A549 (cell line): ENCODE measurements at regions of chr22 and their contacts with region 1.

Region 1: GRCh38 chr22:35582861-35583670 is 34.1 kb downstream of the MB start:
- DNase-seq: peak; percentile 73 to 86
- ATAC-seq: peak; percentile 90 to 91
- H3K4me3 ChIP-seq: no peak overlapping the region
- H3K27ac ChIP-seq: peak overlapping the region; percentile 72 to 78
- H3K4me1 ChIP-seq: peaks cover 33% of the 10 kb centered on the region
- CTCF ChIP-seq: peak; percentile 85
- EP300 ChIP-seq: no peak
- POLR2A ChIP-seq: no peak
- RAD21 ChIP-seq: peak; percentile 90 to 91

Region 2: DNA sequence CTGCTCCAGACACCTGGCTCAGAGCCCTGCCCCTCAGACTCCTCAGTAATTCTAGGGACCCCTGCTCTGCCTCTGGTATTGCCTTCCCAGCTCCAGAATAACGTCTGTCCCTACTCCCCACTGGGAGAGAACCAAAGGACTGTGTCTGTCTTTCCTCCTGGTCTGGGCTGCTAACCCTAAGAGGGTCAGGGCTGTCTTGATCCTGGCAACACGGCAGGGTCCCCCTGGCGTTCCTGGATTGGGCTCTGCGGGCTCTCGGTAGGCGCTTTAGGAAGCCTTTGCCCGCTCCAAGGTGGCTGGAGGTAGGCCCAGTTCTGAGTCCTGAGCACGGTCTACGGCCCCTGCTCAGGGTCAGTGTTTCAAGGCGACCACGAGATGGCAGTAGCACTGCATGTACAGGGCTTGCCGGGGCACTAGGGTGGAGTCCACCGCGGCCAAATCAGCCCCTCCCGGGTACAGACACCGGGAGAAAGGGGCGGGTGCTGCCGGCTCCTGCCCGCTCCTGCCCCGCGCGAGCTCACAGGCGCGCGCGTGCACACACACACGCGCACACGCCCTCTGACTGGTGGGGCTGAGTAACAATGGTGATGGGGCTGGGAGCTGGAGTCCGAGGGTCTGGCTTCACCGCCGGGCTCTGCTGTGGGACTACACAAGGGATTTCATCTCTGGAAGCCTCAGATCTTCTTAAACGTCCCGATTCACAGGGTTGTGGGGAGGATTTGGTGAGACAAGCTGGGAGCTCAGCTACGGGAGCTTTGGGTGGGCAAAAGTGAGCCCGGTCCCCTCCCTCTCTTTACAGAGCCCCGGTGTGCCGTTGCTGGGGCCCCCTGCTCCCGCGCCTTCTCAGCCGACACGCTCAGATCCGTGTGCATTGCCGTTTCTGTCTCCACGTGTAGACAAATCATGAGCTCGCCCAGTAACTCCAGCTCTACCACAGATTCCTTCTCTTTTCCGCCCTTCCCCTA is 232.2 kb before region 1 on chr22:
- CTCF ChIA-PET with region 1: interaction called, 46 read pairs
- POLR2A ChIA-PET with region 1: no interaction called
- DNase-seq: peak; percentile 85 to 91
- ATAC-seq: peak; percentile 81 to 93
- H3K4me3 ChIP-seq: peak overlapping the region; percentile 49
- H3K27ac ChIP-seq: peak overlapping the region; percentile 95 to 98
- H3K4me1 ChIP-seq: peaks cover 29% of the 10 kb centered on the region
- CTCF ChIP-seq: peak; percentile 74
- EP300 ChIP-seq: no peak
- POLR2A ChIP-seq: peak; percentile 57
- RAD21 ChIP-seq: peak; percentile 91 to 95

Region 3: DNA sequence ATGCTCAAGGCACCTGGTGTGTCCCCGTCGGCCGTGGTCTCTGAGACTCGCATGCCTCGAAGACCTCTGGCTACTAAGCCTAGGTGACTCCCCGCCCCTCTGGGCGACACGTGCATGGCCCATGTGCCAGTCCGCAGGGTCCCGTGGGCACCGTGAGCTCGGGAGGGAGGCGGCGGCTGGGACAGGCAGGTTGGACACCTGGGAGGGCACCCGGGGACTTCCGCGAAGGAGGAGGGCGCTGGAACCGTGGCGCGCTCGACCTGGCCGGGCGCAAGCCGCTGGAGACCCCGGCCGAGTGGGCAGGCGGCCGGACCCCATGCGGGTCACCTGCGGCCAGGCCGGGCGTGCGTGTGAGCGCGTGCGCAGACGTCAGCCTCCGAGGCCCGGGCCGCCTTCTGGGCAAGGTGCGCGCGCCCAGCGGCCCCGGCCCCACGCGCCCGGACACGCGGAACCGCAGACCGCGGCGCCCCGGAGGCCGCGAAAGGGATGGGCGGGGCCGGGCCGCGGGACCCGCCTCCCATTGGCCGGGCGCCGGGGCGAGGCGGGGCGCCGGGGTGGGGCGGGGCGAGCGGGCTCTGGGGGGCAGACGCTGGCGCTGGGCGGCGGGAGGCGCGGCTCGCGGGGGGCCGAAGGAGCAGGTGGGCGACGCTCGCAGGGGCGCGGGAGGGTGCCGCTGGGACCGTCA is 43.0 kb before region 1 on chr22:
- CTCF ChIA-PET with region 1: interaction called, 15 read pairs
- POLR2A ChIA-PET with region 1: no interaction called
- DNase-seq: peak in 1 of 2 experiments; percentile 44
- ATAC-seq: peak; percentile 69 to 76
- H3K4me3 ChIP-seq: peak overlapping the region; percentile 65
- H3K27ac ChIP-seq: peak overlapping the region; percentile 83 to 92
- H3K4me1 ChIP-seq: peaks cover 19% of the 10 kb centered on the region
- CTCF ChIP-seq: no peak
- EP300 ChIP-seq: no peak
- POLR2A ChIP-seq: peak; percentile 36; the same call in 1 of the 2 replicates
- RAD21 ChIP-seq: no peak

Region 4: DNA sequence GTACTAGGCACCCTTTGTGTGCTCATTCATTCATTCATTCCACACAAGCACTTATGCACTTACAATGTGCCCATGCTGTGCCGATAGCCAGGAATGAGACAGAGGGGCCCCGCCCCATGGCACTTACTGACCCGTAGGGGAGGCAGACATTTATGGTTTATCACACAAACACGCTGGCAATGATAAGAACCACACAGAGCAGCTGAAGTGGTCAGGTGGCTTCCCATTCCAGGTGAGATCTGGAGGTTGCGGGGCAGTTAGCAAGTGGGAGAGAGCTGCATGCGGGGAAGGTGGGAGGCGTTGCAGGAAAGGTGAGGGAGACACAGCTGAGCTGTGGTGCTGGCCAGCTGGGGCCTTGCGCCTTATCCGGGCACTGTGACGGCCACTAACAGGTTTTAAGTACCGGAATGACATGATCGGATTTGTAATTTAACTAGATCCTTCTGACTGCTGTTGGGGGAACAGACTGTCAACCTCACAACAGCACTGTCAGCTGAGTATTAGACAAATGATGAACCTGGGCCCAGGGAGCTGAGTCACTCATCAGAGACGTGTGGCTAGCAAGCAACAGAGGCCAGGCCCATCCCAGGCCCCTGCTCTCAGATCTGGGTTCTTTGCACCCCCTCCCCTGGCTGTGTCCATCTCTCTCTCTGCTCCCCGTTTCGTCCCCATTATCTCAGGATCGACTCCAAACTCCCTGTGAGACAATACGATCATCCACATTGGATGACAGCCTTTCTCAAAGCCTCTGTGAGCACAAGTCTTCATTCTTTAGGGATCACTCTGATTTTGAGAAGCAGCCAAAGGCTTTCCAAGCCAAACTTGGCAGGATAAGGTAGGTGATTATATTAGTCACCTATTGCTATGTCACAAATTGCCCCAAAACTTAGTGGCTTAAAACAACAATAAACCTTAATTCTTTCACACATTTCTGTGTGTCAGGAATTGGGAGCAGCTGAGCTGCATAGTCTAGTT is 14.0 kb before region 1 on chr22:
- CTCF ChIA-PET with region 1: interaction called, 29 read pairs
- POLR2A ChIA-PET with region 1: no interaction called
- DNase-seq: no peak
- ATAC-seq: peak in 1 of 2 experiments; percentile 69; a peak in 3 of 6 replicates
- H3K4me3 ChIP-seq: no peak overlapping the region
- H3K27ac ChIP-seq: peak overlapping the region; percentile 30 to 55; a peak in 3 of 6 replicates
- H3K4me1 ChIP-seq: peaks cover 15% of the 10 kb centered on the region
- CTCF ChIP-seq: no peak
- EP300 ChIP-seq: no peak
- POLR2A ChIP-seq: no peak
- RAD21 ChIP-seq: no peak

Region 5: GRCh38 chr22:35596821-35597220 is 13.8 kb after region 1 on chr22:
- CTCF ChIA-PET with region 1: no interaction called
- POLR2A ChIA-PET with region 1: no interaction called
- DNase-seq: no peak
- ATAC-seq: no peak
- H3K4me3 ChIP-seq: no peak overlapping the region
- H3K27ac ChIP-seq: no peak overlapping the region
- H3K4me1 ChIP-seq: peaks cover 18% of the 10 kb centered on the region
- CTCF ChIP-seq: no peak
- EP300 ChIP-seq: no peak
- POLR2A ChIP-seq: no peak
- RAD21 ChIP-seq: no peak

Region 6: GRCh38 chr22:35611891-35612576 is 29.0 kb after region 1 on chr22:
- CTCF ChIA-PET with region 1: interaction called, 16 read pairs
- POLR2A ChIA-PET with region 1: no interaction called
- DNase-seq: no peak
- ATAC-seq: no peak
- H3K4me3 ChIP-seq: no peak overlapping the region
- H3K27ac ChIP-seq: peak overlapping the region in 1 of 2 experiments; percentile 34; a peak in 1 of 6 replicates
- H3K4me1 ChIP-seq: 0 out of 3 replicates have a peak, but pooled peaks cover 4% of the 10 kb centered on the region
- CTCF ChIP-seq: no peak
- EP300 ChIP-seq: no peak
- POLR2A ChIP-seq: no peak
- RAD21 ChIP-seq: no peak

Region 7: GRCh38 chr22:35622191-35622913 is 39.3 kb after region 1 on chr22:
- CTCF ChIA-PET with region 1: interaction called, 20 read pairs
- POLR2A ChIA-PET with region 1: no interaction called
- DNase-seq: peak in 1 of 2 experiments; percentile 75
- ATAC-seq: peak; percentile 38 to 58
- H3K4me3 ChIP-seq: 0 out of 3 replicates have a peak overlapping the region, but pooled peaks have one; percentile 0
- H3K27ac ChIP-seq: peak overlapping the region; percentile 83 to 99
- H3K4me1 ChIP-seq: peaks cover 40% of the 10 kb centered on the region
- CTCF ChIP-seq: no peak
- EP300 ChIP-seq: no peak; a peak in 1 of 5 replicates
- POLR2A ChIP-seq: no peak
- RAD21 ChIP-seq: no peak; a peak in 1 of 5 replicates

Region 8: GRCh38 chr22:35812600-35812999 is 229.5 kb after region 1 on chr22:
- CTCF ChIA-PET with region 1: no interaction called
- POLR2A ChIA-PET with region 1: no interaction called
- DNase-seq: no peak
- ATAC-seq: no peak
- H3K4me3 ChIP-seq: no peak overlapping the region
- H3K27ac ChIP-seq: no peak overlapping the region
- H3K4me1 ChIP-seq: no peaks in the 10 kb centered on the region
- CTCF ChIP-seq: no peak
- EP300 ChIP-seq: no peak
- POLR2A ChIP-seq: no peak
- RAD21 ChIP-seq: no peak